ENCODE measurements at regions of chr14 and their contacts with region 1.

Region 1: DNA sequence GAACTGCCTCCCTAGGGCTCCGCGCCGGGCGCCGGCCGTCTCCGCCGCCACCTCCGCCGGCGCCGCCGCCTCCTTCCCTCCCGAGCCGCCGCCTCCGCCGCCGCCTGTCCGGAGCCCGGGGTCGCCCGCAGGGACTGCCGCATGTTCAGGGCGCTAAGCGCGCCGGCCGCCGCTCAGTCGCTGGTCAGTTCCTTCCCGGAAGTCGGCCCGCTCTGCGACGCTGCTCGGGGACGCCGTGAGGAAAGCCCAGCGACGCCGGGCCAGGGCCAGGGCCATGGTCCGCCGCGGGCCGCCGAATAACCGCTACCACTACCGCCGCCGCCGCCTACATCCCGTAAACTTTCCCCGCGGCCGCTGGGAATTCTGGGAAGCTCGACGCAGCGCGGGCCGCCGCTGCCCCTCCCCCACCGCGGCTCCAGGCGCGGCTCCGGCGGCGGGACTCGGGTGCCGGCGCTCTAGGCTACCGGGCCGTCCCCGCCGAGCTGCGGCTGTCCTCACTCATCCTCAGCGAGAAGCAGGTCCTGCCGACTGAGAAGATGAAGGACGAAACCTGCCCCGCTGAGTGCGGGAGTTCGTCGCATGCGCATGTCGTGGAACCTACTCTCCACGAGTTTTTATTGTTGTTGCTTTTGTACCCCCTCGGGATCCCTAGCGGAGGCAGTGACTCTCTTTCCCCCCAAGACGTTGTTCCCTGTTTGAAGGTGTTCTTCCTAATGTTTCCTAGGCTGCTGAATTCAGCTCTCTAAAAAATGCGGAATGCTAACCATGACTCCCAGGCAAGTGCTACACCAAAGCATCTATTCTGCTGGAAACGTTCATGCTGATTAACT is at the start of gene SAV1:
- DNase-seq: peak; percentile 81
- H3K4me3 ChIP-seq: peak within 1 kb of the TSS; percentile 73 to 91 (median 82)
- H3K27ac ChIP-seq: peak within 1 kb of the TSS; percentile 92
- H3K4me1 ChIP-seq: peaks cover 20% of the 10 kb centered on the region
- H3K27me3 ChIP-seq: no peaks in the 10 kb centered on the region
- CTCF ChIP-seq: peak in 1 of 2 donors; percentile 4
- total RNA-seq, gene SAV1: 53.3 to 63.5 TPM

Region 2: GRCh38 chr14:50599700-50600444 is 68.3 kb before region 1 on chr14:
- CTCF ChIA-PET with region 1: interaction called, 5 read pairs
- dilution Hi-C with region 1: no loop called
- in situ Hi-C with region 1: no loop called
- intact Hi-C with region 1: loop called (anchors 2 kb)
- DNase-seq: peak; percentile 76
- H3K4me3 ChIP-seq: peak overlapping the region in 1 of 3 experiments; percentile 32
- H3K27ac ChIP-seq: peak overlapping the region; percentile 61
- H3K4me1 ChIP-seq: peaks cover 27% of the 10 kb centered on the region
- H3K27me3 ChIP-seq: no peaks in the 10 kb centered on the region
- CTCF ChIP-seq: peak; percentile 55 to 59

Region 3: DNA sequence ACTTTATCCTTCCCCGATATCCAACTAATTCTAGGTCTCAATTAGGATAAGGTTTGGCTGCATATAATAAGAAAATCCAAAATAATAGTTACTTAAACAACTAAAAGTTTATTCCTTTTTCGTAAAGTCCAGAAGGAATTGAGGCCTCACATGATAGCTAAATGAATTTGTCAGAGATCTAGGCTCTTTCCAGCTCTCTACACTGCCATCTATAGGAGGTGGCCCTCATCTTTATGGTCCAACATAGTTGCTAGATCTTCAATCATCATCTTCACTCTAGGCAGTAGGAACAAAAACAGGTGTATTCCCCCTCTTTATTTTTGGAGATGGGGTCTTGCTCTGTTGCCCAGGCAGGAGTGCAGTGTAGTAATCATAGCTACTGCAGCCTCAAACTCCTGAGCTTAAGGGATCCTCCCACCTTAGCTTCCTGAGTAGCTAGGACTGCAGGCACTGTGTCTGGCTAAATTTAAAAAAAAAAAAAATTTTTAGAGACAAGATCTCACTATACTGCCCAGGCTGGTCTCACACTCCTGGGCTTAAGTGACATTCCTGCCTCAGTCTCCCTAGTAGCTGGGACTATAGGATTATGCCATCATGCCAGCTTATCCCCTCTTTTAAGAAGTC is 46.4 kb after region 1 on chr14:
- CTCF ChIA-PET with region 1: interaction called, 3 read pairs
- dilution Hi-C with region 1: no loop called
- in situ Hi-C with region 1: no loop called
- intact Hi-C with region 1: loop called (anchors 1 kb)
- DNase-seq: peak; percentile 44
- H3K4me3 ChIP-seq: no peak overlapping the region
- H3K27ac ChIP-seq: no peak overlapping the region
- H3K4me1 ChIP-seq: no peaks in the 10 kb centered on the region
- H3K27me3 ChIP-seq: no peaks in the 10 kb centered on the region
- CTCF ChIP-seq: peak; percentile 55 to 61